Naive thymus-derived CD8-positive, alpha-beta T cell (primary cell): ENCODE measurements at regions of chr9 and their contacts with region 1.

Region 1: GRCh38 chr9:33446946-33447798 is at the start of gene AQP3:
- DNase-seq: peak; percentile 56 to 85 (median 68)
- ATAC-seq: peak; percentile 50 to 70
- H3K4me3 Mint-ChIP-seq: peak within 1 kb of the TSS; percentile 90 to 99 (median 95)
- H3K27ac Mint-ChIP-seq: peak within 1 kb of the TSS; percentile 92 to 98 (median 96)
- H3K4me1 Mint-ChIP-seq: peaks cover 25 to 72% (median 52%) of the 10 kb centered on the region in 4 donors
- H3K27me3 Mint-ChIP-seq: no peaks in the 10 kb centered on the region
- polyA plus RNA-seq, gene AQP3: 124 to 166 (median 145) TPM

Region 2: DNA sequence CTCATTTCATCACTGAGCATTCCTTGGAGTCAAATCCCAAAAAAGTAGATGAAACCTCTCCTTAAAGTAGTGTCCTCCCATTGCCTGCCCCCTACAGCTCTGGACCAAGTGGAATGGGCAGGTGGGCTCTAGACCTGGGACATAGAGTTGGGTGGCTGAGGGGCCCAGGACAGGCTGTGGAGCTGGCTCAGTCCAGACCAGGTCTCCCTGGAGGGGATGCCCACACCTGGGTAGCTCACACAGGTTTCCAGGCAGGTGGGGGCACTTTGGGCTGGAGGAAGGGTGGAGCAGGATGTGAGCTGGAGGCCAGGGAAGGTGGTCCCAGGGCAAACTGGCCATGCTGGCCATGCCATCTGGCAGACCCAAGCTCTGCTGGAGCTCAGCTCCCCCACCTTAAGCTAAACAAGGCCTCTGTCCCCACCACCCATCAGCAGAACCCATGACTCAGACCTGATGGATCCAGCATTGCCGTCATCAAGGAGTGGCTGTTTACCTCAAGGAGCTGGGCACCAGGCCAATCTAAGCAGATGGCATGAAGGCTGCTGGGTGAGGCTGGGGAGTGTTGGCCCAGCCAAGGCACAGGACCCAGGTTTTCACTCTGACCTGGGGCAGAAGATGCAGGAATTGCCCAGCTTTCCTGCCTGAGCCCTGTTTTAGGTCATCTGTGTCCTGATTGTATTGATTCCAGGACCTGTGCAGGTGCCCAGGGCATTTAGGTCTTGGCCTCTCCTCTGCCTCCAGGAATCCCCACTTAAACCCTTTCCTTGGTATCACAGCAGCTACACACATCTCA is 213.3 kb before region 1 on chr9:
- POLR2A ChIA-PET with region 1: no interaction called
- DNase-seq: no peak
- ATAC-seq: peak in 1 of 2 donors; percentile 29
- H3K4me3 Mint-ChIP-seq: no peak overlapping the region
- H3K27ac Mint-ChIP-seq: no peak overlapping the region
- H3K4me1 Mint-ChIP-seq: peaks cover 0 to 6% (median 0%) of the 10 kb centered on the region in 4 donors
- H3K27me3 Mint-ChIP-seq: peaks cover 3 to 10% (median 7%) of the 10 kb centered on the region in 5 donors

Region 3: GRCh38 chr9:33404788-33405362 is 42.3 kb before region 1 on chr9:
- POLR2A ChIA-PET with region 1: interaction called, 15 read pairs
- DNase-seq: no peak
- ATAC-seq: no peak
- H3K4me3 Mint-ChIP-seq: no peak overlapping the region
- H3K27ac Mint-ChIP-seq: peak overlapping the region in 9 of 10 donors; percentile 32 to 88 (median 60)
- H3K4me1 Mint-ChIP-seq: peaks cover 3 to 8% (median 4%) of the 10 kb centered on the region in 4 donors
- H3K27me3 Mint-ChIP-seq: no peaks in the 10 kb centered on the region

Region 4: GRCh38 chr9:33466565-33467495 is 19.7 kb after region 1 on chr9:
- POLR2A ChIA-PET with region 1: interaction called, 93 read pairs
- DNase-seq: peak; percentile 34 to 81 (median 70)
- ATAC-seq: peak; percentile 80 to 88
- H3K4me3 Mint-ChIP-seq: no peak overlapping the region
- H3K27ac Mint-ChIP-seq: peak overlapping the region; percentile 19 to 82 (median 57)
- H3K4me1 Mint-ChIP-seq: peaks cover 6 to 18% (median 8%) of the 10 kb centered on the region in 4 donors
- H3K27me3 Mint-ChIP-seq: no peaks in the 10 kb centered on the region

Region 5: GRCh38 chr9:33535541-33535940 is 88.4 kb after region 1 on chr9:
- POLR2A ChIA-PET with region 1: no interaction called
- DNase-seq: no peak
- ATAC-seq: no peak
- H3K4me3 Mint-ChIP-seq: no peak overlapping the region
- H3K27ac Mint-ChIP-seq: no peak overlapping the region
- H3K4me1 Mint-ChIP-seq: no peaks in the 10 kb centered on the region
- H3K27me3 Mint-ChIP-seq: peaks cover 2 to 13% (median 6%) of the 10 kb centered on the region in 5 donors